PC-9 (cell line): ENCODE measurements at regions of chr6 and their contacts with region 1.

Region 1: GRCh38 chr6:89638320-89639195 is at the start of gene LYRM2:
- DNase-seq: peak; percentile 78 to 93
- H3K4me3 ChIP-seq: peak within 1 kb of the TSS; percentile 93
- H3K27ac ChIP-seq: peak within 1 kb of the TSS; percentile 59
- H3K4me1 ChIP-seq: peaks cover 13% of the 10 kb centered on the region; the same call in 1 of the 2 replicates
- H3K27me3 ChIP-seq: no peaks in the 10 kb centered on the region
- CTCF ChIP-seq: no peak
- total RNA-seq, gene LYRM2: 16.7 and 24.2 TPM in 2 replicates

Region 2: DNA sequence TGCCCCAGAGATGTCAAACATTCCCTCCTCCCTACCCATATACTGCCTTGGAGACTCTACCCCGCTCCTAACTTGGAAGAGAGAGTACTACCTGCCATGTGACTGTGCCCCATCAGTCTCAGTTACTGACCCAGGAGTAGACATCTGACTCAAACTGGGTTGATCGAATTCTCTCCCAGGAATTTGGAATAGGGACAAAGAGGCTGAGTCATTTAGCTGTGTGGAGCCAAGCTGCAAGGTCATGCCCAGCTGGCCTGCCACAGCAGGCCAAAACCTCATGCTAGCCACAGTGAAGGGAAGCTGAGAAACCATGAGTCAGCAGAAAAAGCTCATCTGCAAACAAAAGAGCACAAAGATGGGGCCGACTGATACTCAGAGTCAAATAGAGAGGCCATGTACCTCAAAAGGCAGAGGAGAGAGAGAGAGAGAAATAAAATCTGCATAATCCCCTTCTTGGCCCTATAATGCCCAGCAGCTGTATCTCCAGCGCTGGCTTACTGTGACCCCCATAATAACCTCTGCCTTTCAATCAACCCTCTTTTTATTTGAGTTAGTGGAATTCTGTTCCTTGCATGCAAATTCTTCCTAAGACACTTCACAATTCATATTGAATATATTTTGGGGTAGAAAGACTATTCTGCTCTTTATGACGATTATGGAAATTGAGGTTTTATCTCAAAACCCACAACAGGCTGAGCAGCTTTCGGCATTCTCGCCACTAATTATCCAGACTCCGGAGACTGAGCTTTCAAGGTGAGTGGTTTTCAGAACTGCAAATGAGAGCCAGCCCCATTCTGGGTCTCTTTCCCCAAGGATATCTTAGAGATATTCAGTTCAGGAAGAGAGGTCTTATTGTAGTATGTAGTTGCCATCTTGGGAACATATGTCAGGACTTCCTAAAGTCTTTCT is 1915.1 kb before region 1 on chr6:
- CTCF ChIA-PET with region 1: no interaction called
- POLR2A ChIA-PET with region 1: interaction called, 10 read pairs
- intact Hi-C with region 1: no loop called
- DNase-seq: peak; percentile 78 to 91
- H3K4me3 ChIP-seq: no peak overlapping the region
- H3K27ac ChIP-seq: peak overlapping the region; percentile 74
- H3K4me1 ChIP-seq: peaks cover 36% of the 10 kb centered on the region
- H3K27me3 ChIP-seq: no peaks in the 10 kb centered on the region
- CTCF ChIP-seq: no peak

Region 3: GRCh38 chr6:89007209-89008000 is 631.2 kb before region 1 on chr6:
- CTCF ChIA-PET with region 1: no interaction called
- POLR2A ChIA-PET with region 1: interaction called, 13 read pairs
- intact Hi-C with region 1: no loop called
- DNase-seq: no peak
- H3K4me3 ChIP-seq: no peak overlapping the region
- H3K27ac ChIP-seq: no peak overlapping the region
- H3K4me1 ChIP-seq: no peaks in the 10 kb centered on the region
- H3K27me3 ChIP-seq: no peaks in the 10 kb centered on the region
- CTCF ChIP-seq: no peak